ENCODE measurements at regions of chr2 and their contacts with region 1.

Region 1: DNA sequence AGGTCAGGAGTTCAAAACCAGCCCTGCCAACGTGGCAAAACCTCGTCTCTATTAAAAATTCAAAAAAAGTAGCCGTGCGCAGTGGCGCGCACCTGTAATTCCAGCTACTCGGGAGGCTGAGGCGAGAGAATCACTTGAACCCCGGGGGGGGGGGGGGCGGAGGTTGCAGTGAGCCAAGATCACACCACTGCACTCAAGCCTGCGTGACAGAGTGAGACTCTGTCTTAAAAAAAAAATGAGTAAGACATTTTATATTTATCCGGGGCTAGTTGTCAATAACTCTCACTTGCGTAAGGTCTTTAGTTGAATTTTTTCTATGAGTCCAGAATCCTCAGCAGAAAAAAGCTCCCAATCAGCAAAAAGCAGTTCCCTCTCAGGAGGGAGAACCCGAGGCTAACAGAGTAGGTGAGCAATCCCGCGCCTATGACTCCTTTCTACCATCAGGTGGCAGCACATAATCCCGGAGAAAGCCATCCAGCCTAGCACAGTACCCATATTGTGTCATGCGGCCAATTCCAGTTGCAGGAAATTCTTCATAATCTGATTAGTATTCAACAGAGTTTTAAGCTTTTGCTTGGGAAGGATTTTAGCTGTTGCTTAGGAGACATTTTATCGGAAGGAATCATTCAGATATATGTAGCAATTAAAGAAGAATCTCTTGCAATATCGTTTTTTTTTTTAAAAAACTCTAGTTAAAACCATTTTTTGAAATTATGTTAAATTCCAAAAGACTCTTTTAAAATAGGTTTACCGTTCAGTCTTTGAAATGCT is 11.9 kb upstream of the CRYGA start:
- DNase-seq: peak; percentile 83 to 86 (median 84)
- H3K4me3 ChIP-seq: no peak overlapping the region
- H3K27ac ChIP-seq: no peak overlapping the region
- H3K4me1 ChIP-seq: peaks cover 2 to 33% (median 10%) of the 10 kb centered on the region in 4 experiments
- H3K27me3 ChIP-seq: no peaks in the 10 kb centered on the region

Region 2: DNA sequence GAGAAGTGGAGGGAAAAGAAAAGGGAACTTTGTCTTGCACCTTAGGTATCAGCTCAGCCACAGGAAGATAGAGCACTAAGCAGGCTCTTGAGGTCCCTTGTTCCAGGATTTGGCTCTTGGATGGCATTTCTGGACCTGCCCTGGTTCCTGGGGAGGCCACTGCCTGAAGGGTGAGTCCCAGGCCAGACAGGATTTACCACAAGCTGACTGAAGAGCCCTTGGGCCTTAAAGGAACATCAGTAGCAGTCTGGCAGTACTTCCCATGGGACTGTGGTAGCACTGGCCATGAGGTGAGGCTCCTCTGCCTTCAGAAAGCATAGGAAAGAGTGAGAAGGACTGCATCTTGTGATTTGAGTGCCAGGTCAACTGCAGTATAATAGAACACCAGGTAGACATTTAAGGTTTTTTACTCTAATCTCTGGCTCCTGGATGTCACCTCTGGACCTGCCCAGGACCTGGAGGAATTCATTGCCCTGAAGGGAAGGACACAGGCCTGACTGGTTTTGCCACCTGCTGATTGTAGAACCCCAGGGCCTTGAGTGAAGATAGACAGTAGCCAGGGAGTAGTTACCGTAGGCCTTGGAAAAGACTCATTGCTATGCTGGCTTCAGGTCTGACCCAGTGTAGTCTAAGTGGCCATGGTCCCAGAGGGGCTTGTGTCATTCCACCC is 799.9 kb before region 1 on chr2:
- CTCF ChIA-PET with region 1: no interaction called
- POLR2A ChIA-PET with region 1: no interaction called
- DNase-seq: no peak
- H3K4me3 ChIP-seq: no peak overlapping the region
- H3K27ac ChIP-seq: no peak overlapping the region
- H3K4me1 ChIP-seq: no peaks in the 10 kb centered on the region
- H3K27me3 ChIP-seq: no peaks in the 10 kb centered on the region

Region 3: DNA sequence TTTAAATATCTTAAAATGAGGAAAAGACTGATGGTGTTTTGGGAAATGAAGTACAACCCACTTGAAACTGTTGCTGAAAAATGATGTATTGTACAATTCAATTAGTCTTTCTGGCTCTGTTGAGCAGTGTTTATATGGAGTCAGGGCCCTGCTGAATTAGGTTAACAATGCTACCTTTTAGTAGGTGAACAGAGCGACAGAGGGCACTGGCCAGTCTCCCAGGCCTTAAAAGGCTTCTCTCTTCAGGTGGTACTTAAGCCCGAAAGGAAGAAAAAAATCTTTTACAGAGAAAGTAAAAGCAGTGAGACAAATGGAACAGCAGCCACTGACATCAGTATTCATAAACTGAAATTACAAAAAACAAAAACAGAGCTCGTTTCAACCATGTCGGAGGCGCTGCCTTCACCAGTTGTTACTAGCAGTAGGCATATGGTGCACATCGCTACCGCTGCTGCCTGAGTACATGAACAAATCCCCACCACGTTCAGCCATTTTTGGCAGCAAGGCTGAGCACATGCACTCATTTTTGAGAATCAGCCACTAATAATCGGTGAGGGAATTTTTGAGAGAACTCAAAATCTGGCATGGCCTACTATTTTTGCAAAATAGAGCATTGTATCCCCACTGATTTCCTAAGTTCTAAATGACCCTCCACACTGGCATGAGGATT is 241.7 kb before region 1 on chr2:
- CTCF ChIA-PET with region 1: no interaction called
- POLR2A ChIA-PET with region 1: no interaction called
- DNase-seq: no peak
- H3K4me3 ChIP-seq: no peak overlapping the region
- H3K27ac ChIP-seq: no peak overlapping the region
- H3K4me1 ChIP-seq: no peaks in the 10 kb centered on the region
- H3K27me3 ChIP-seq: no peaks in the 10 kb centered on the region

Region 4: GRCh38 chr2:208086029-208086428 is 89.2 kb before region 1 on chr2:
- CTCF ChIA-PET with region 1: no interaction called
- POLR2A ChIA-PET with region 1: no interaction called
- DNase-seq: peak in 2 of 3 donors; percentile 37 to 39
- H3K4me3 ChIP-seq: no peak overlapping the region
- H3K27ac ChIP-seq: no peak overlapping the region
- H3K4me1 ChIP-seq: peaks cover 0 to 4% (median 2%) of the 10 kb centered on the region in 4 experiments
- H3K27me3 ChIP-seq: no peaks in the 10 kb centered on the region

Region 5: DNA sequence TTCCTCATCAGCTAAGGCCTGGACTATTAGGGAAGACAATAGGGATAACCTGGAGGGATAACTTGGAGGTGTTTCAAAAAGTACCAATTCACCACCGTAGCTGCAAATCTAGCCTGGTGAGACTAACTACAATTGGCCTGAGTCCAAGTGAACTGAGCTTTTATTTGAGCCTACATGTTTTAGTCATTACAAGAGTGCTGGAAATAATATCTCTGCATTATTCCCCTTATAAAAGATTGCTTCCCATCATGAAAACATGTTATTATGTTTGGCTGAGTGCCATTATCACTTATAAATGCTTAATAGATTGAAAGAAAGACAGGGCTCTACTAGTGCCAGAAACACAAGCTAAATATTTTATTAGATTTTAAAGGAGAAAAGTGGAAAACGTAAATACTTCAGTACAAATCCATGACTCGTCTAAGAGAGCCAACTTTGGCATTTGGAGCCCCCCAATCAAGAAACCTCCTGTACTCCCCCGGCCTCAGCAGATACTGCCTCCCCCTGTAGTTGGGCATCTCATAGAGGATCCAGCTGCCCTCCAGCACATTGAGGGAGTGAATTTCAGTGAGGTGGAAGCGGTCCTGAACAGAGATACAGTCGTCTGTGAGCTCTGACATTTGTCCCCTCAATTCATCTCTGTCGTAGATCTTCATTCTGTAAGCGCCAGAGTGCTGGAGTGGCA is 32.9 kb before region 1 on chr2:
- CTCF ChIA-PET with region 1: interaction called, 10 read pairs
- POLR2A ChIA-PET with region 1: no interaction called
- DNase-seq: no peak
- H3K4me3 ChIP-seq: no peak overlapping the region
- H3K27ac ChIP-seq: no peak overlapping the region
- H3K4me1 ChIP-seq: peaks cover 0 to 2% (median 0%) of the 10 kb centered on the region in 4 experiments
- H3K27me3 ChIP-seq: no peaks in the 10 kb centered on the region

Region 6: DNA sequence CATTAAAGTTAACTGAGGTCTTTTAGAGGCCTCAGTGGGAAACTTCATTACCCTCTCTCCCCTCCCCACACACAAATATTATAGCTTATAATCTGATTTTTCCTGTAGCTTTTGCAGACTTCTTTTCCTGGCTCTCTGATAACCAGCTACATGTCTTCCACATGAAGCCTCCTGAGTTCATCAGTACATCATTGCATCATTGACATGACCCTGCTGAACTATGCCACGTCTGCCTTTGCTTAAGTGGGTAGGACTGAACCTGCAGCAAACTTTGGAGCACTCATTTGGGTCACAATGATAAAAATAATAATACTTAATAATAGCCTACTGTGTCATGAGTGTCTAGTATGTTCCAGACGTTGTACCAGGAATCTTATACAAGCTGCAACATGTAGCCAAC is 18.8 kb before region 1 on chr2:
- CTCF ChIA-PET with region 1: interaction called, 10 read pairs
- POLR2A ChIA-PET with region 1: no interaction called
- DNase-seq: no peak
- H3K4me3 ChIP-seq: no peak overlapping the region
- H3K27ac ChIP-seq: no peak overlapping the region
- H3K4me1 ChIP-seq: no peaks in the 10 kb centered on the region
- H3K27me3 ChIP-seq: no peaks in the 10 kb centered on the region

Region 7: GRCh38 chr2:208249241-208249640 is 74.0 kb after region 1 on chr2:
- CTCF ChIA-PET with region 1: interaction called, 58 read pairs
- POLR2A ChIA-PET with region 1: interaction called, 4 read pairs
- DNase-seq: no peak
- H3K4me3 ChIP-seq: no peak overlapping the region
- H3K27ac ChIP-seq: no peak overlapping the region
- H3K4me1 ChIP-seq: peaks cover 33 to 52% (median 40%) of the 10 kb centered on the region in 4 experiments
- H3K27me3 ChIP-seq: no peaks in the 10 kb centered on the region

Region 8: GRCh38 chr2:208254871-208255556 is 79.8 kb after region 1 on chr2 and contains the start of gene IDH1:
- CTCF ChIA-PET with region 1: interaction called, 58 read pairs
- POLR2A ChIA-PET with region 1: interaction called, 4 read pairs
- DNase-seq: peak; percentile 87 to 91 (median 89)
- H3K4me3 ChIP-seq: peak within 1 kb of the TSS; percentile 75 to 99 (median 91)
- H3K27ac ChIP-seq: peak within 1 kb of the TSS; percentile 25 to 79
- H3K4me1 ChIP-seq: peaks cover 30 to 48% (median 41%) of the 10 kb centered on the region in 4 experiments
- H3K27me3 ChIP-seq: no peaks in the 10 kb centered on the region

Region 9: GRCh38 chr2:208265801-208266552 is 90.7 kb after region 1 on chr2 and contains the start of gene PIKFYVE:
- CTCF ChIA-PET with region 1: interaction called, 10 read pairs
- POLR2A ChIA-PET with region 1: no interaction called
- DNase-seq: peak; percentile 98 to 99 (median 98)
- H3K4me3 ChIP-seq: peak within 1 kb of the TSS; percentile 45 to 97 (median 81)
- H3K27ac ChIP-seq: peak within 1 kb of the TSS; percentile 86 to 95
- H3K4me1 ChIP-seq: peaks cover 21 to 40% (median 35%) of the 10 kb centered on the region in 4 experiments
- H3K27me3 ChIP-seq: no peaks in the 10 kb centered on the region